Heart left ventricle (tissue), 16 donors: ENCODE measurements at regions of chr14 and their contacts with region 1.

Region 1: GRCh38 chr14:70972107-70972976 is 65.1 kb downstream of the PCNX1 start:
- DNase-seq: peak; percentile 64 to 84 (median 81)
- ATAC-seq: peak; percentile 60 to 89 (median 87)
- H3K4me3 ChIP-seq: no peak overlapping the region
- H3K27ac ChIP-seq: no peak overlapping the region
- H3K4me1 ChIP-seq: peaks cover 0 to 15% (median 4%) of the 10 kb centered on the region in 12 donors
- H3K27me3 ChIP-seq: no peaks in the 10 kb centered on the region
- CTCF ChIP-seq: peak; percentile 88 to 98 (median 94)
- POLR2A ChIP-seq: no peak

Region 2: GRCh38 chr14:70600382-70601157 is 371.8 kb before region 1 on chr14 and contains the start of gene MED6:
- intact Hi-C with region 1: loop called in 1 of 10 experiments (anchors 10 kb)
- DNase-seq: peak; percentile 94 to 96 (median 95)
- ATAC-seq: peak; percentile 99 to 100 (median 100)
- H3K4me3 ChIP-seq: peak within 1 kb of the TSS; percentile 56 to 92 (median 84)
- H3K27ac ChIP-seq: peak within 1 kb of the TSS in 10 of 12 donors; percentile 27 to 79 (median 70)
- H3K4me1 ChIP-seq: peaks cover 0 to 26% (median 15%) of the 10 kb centered on the region in 12 donors
- H3K27me3 ChIP-seq: peaks cover 0 to 4% (median 0%) of the 10 kb centered on the region in 9 donors
- CTCF ChIP-seq: no peak
- POLR2A ChIP-seq: no peak
- total RNA-seq, gene MED6: 13.0 to 25.1 (median 19.7) TPM

Region 3: GRCh38 chr14:70622111-70622712 is 350.1 kb before region 1 on chr14:
- intact Hi-C with region 1: loop called in 3 of 10 experiments (anchors 5 to 10 kb)
- DNase-seq: no peak
- ATAC-seq: peak in 3 of 4 donors; percentile 47 to 77 (median 56)
- H3K4me3 ChIP-seq: no peak overlapping the region
- H3K27ac ChIP-seq: no peak overlapping the region
- H3K4me1 ChIP-seq: peaks cover 0 to 7% (median 0%) of the 10 kb centered on the region in 12 donors
- H3K27me3 ChIP-seq: no peaks in the 10 kb centered on the region
- CTCF ChIP-seq: peak; percentile 45 to 70 (median 62)
- POLR2A ChIP-seq: no peak

Region 4: DNA sequence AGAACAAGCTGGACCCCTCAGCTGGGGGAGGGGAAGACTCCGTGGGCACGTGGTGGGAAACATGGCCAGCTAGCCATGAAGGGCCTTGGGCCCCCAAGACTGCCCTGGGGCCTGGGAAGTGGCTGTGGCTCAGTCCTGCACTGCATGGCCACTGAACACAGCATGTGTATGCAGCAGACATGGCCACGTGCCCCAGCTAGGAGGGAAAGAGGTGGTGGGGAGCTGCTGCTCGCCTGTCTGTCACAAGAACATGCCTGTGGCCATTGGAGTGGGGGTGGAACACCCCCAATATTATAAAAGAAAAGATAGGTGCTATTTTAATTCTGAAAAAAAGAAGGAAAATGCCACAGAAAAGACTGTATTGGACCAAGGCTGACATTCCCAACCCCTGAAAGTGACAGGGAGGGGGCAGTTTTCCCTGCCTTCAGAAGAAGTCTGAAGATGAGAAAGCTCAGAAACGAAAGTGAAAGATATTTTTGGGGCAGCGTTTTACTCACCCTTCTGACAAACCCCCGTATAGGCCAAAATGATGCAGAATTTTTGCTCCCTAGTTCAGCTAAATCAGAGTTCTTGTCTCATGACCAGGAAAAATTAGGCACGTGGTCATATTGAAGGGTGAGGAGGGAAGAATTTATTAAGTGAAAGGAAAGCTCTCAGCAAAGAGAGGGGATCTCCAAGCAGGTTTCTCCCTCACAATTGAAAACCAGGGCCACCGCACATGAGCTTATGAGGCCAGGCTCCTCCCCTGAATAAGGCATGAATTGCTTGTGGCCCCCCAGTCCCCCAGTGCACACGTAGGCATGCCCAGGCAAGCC is 100.3 kb before region 1 on chr14:
- intact Hi-C with region 1: no loop called
- DNase-seq: no peak
- ATAC-seq: no peak
- H3K4me3 ChIP-seq: no peak overlapping the region
- H3K27ac ChIP-seq: peak overlapping the region in 1 of 12 donors; percentile 59
- H3K4me1 ChIP-seq: peaks cover 0 to 10% (median 0%) of the 10 kb centered on the region in 12 donors
- H3K27me3 ChIP-seq: no peaks in the 10 kb centered on the region
- CTCF ChIP-seq: no peak
- POLR2A ChIP-seq: no peak

Region 5: DNA sequence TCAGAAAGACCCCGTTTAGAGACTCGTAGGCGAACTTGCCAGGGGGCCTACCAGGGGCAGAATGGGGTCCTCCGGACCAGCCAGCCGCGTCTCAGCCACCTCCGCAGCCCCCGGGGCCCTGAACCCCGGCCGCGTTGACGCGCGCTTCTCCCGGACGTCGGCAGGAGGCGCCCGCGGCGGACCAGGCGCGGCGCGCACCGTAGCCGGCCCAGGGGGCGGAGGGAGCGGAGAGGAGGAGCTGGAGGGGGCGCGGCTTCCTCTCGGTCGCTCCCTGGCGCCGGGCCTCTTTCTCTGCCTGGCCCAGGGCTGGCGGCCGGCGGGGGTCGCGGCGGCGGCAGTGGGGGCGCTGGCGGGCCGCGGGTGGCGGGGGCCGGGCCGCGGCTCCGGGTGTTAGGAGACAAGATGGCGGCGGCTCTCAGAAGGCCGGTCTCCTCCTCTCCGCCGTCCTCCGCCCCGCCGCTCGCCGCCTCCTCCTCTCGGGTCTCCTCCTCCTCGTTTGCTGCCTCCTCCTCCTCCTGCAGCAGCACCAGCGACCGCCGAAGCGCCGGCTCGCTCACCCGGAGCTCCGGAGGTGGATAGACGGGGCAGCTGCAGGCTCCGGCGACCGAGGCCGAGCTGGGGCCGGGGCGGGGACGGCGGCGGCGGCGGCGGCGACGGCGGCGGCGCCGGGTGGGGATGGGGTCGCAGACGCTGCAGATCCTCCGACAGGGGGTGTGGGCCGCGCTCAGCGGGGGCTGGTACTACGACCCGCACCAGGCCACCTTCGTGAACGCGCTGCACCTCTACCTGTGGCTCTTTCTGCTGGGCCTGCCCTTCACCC is 65.0 kb before region 1 on chr14 and contains the start of gene PCNX1:
- intact Hi-C with region 1: loop called (anchors 2 to 5 kb)
- DNase-seq: peak; percentile 90 to 94 (median 91)
- ATAC-seq: peak; percentile 82 to 91 (median 86)
- H3K4me3 ChIP-seq: peak within 1 kb of the TSS; percentile 78 to 99 (median 94)
- H3K27ac ChIP-seq: peak within 1 kb of the TSS; percentile 80 to 98 (median 94)
- H3K4me1 ChIP-seq: peaks cover 0 to 66% (median 50%) of the 10 kb centered on the region in 12 donors
- H3K27me3 ChIP-seq: no peaks in the 10 kb centered on the region
- CTCF ChIP-seq: peak; percentile 73 to 97 (median 89)
- POLR2A ChIP-seq: peak in 1 of 2 donors; percentile 37
- total RNA-seq, gene PCNX1: 36.3 to 64.7 (median 53.4) TPM

Region 6: DNA sequence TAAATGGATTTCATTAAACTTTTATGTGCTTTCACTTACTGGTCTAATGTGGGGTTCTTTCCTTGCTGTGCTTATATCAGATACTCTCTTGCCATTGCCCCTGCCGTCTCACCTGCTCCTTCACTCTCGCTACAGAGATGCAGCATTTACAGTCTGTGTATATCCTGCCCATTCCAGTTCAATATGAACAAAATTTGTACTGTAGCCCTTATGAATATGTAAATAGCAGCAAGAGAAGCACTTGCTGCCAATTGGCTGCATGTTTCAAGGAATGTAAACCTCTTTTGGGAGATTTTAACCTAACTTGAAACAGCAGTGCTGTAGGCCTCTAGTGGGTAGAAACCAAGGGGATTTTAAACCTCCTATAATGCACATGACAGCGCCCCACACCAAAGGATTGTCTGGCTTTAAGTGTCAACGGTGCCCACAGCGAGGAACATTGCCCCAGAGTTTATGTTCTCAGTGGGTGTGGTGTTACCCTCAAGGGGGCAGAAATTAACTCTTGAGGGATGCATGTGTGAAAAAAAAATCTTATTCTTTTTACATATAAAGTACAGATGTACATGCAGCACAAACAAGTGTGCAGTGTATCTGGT is 46.0 kb before region 1 on chr14:
- intact Hi-C with region 1: no loop called
- DNase-seq: no peak
- ATAC-seq: no peak
- H3K4me3 ChIP-seq: no peak overlapping the region
- H3K27ac ChIP-seq: no peak overlapping the region
- H3K4me1 ChIP-seq: peaks cover 0 to 61% (median 15%) of the 10 kb centered on the region in 12 donors
- H3K27me3 ChIP-seq: no peaks in the 10 kb centered on the region
- CTCF ChIP-seq: no peak
- POLR2A ChIP-seq: no peak